Upper lobe of right lung (tissue), 1 donor: ENCODE measurements at regions of chr5 and their contacts with region 1.

Region 1: GRCh38 chr5:126676195-126676624 is 75.5 kb downstream of the PHAX start:
- DNase-seq: no peak
- ATAC-seq: peak; percentile 94
- H3K4me3 ChIP-seq: no peak overlapping the region
- H3K27ac ChIP-seq: no peak overlapping the region
- H3K4me1 ChIP-seq: no peaks in the 10 kb centered on the region
- H3K27me3 ChIP-seq: no peaks in the 10 kb centered on the region
- CTCF ChIP-seq: peak; percentile 81

Region 2: GRCh38 chr5:126525630-126526245 is 150.5 kb before region 1 on chr5:
- intact Hi-C with region 1: no loop called
- DNase-seq: no peak
- ATAC-seq: peak; percentile 66
- H3K4me3 ChIP-seq: no peak overlapping the region
- H3K27ac ChIP-seq: peak overlapping the region; percentile 74
- H3K4me1 ChIP-seq: peaks cover 39% of the 10 kb centered on the region
- H3K27me3 ChIP-seq: no peaks in the 10 kb centered on the region
- CTCF ChIP-seq: no peak

Region 3: DNA sequence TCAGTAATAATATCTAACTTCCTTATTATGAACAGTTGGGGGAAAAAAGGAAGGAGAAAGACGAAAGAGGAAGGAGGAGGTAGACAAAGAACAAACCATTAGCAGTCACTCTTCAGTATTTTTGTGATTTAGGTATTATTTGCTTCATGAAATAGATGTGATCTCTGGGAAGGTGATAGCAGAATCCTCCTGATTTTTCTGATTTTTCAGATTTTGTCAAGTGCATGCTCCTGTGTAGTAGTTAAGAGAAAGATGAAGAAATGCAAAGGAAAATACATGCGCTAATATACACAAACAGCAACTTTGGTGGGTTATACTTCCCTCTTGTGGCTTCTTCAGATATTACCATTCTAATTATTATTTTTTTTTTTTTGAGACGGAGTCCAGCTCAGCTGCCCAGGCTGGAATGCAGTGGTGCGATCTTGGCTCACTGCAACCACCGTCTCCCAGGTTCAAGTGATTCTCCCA is 132.3 kb after region 1 on chr5:
- intact Hi-C with region 1: loop called (anchors 10 kb)
- DNase-seq: no peak
- ATAC-seq: peak; percentile 81
- H3K4me3 ChIP-seq: no peak overlapping the region
- H3K27ac ChIP-seq: no peak overlapping the region
- H3K4me1 ChIP-seq: no peaks in the 10 kb centered on the region
- H3K27me3 ChIP-seq: no peaks in the 10 kb centered on the region
- CTCF ChIP-seq: peak; percentile 58

Region 4: GRCh38 chr5:127280491-127281220 is 604.4 kb after region 1 on chr5:
- intact Hi-C with region 1: no loop called
- DNase-seq: no peak
- ATAC-seq: no peak
- H3K4me3 ChIP-seq: no peak overlapping the region
- H3K27ac ChIP-seq: no peak overlapping the region
- H3K4me1 ChIP-seq: no peaks in the 10 kb centered on the region
- H3K27me3 ChIP-seq: no peaks in the 10 kb centered on the region
- CTCF ChIP-seq: no peak